Psoas muscle (tissue), 8 donors: ENCODE measurements at regions of chrX and their contacts with region 1.

Region 1: DNA sequence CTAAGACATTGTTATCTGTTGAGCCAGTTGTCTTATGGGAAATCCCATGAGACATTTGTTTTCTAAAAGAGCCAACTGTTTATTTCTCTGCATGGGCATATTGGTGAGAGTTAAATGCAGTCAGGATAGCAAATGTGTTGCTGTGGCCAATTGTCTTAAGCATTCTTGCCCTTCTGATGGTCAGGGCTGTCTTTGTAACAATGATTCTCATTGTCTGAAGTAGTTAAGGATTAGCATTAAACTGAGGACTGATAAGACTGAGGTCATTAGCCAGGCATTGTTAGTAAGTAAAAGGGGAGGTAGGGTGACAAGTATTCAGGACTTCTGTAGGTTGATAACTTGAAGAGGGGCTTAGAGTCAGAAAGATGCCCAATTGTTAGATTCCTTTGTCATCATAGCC is 11.2 kb upstream of the MORF4L2 start:
- DNase-seq: no peak
- ATAC-seq: no peak
- H3K4me3 ChIP-seq: no peak overlapping the region
- H3K27ac ChIP-seq: no peak overlapping the region
- H3K4me1 ChIP-seq: no peaks in the 10 kb centered on the region
- H3K27me3 ChIP-seq: peaks cover 0 to 9% (median 0%) of the 10 kb centered on the region in 3 donors
- CTCF ChIP-seq: no peak

Region 2: DNA sequence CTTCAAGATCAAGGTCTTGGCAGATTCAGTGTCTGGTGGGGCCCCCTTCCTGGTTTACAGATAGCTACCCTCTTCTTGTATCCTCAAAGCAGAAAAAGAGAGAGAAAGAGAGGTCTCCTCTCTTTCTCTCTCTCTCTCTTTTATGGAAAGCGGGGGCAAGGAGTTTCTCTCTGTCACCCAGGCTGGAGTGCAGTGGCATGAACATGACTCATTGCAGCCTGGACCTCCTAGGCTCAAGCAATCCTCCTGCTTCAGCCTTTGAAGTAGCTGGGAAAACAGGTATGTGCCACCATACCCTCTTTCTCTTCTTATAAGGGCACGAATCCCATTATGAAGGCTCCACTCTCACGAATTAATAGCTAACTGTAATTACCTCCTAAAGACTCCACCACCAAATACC is 114.2 kb after region 1 on chrX:
- intact Hi-C with region 1: loop called (anchors 5 kb)
- DNase-seq: no peak
- ATAC-seq: no peak
- H3K4me3 ChIP-seq: no peak overlapping the region
- H3K27ac ChIP-seq: no peak overlapping the region
- H3K4me1 ChIP-seq: no peaks in the 10 kb centered on the region
- H3K27me3 ChIP-seq: peaks cover 0 to 18% (median 0%) of the 10 kb centered on the region in 3 donors
- CTCF ChIP-seq: no peak

Region 3: DNA sequence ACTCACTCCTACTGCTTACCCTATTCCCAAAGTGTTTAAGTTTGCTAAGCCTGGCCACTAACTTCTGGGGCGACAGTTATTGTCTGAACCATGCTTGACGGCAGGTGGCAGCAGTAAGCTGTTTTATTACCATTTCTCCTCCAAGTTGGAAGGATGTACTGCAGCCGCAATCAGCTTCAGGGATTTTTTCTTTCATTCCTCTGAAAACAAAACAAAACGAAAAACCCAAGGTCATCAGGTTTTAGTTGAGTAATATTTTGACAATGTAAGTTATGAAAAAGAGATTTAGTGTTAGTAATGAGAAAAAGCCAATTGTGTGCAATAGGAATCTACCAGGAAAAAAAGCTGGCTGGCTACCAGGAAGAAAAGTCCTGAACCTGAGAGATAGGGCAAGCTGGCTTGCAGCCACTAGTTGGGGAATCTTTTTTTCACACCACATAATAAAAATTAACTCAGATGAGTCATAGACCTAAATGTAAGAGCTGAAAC is 147.5 kb after region 1 on chrX:
- intact Hi-C with region 1: no loop called
- DNase-seq: peak; percentile 52 to 56
- ATAC-seq: peak in 2 of 4 donors; percentile 54 to 76
- H3K4me3 ChIP-seq: no peak overlapping the region
- H3K27ac ChIP-seq: no peak overlapping the region
- H3K4me1 ChIP-seq: no peaks in the 10 kb centered on the region
- H3K27me3 ChIP-seq: peaks cover 0 to 10% (median 0%) of the 10 kb centered on the region in 3 donors
- CTCF ChIP-seq: peak; percentile 64